OCI-LY7 (cell line): ENCODE measurements at regions of chr1 and their contacts with region 1.

Region 1: DNA sequence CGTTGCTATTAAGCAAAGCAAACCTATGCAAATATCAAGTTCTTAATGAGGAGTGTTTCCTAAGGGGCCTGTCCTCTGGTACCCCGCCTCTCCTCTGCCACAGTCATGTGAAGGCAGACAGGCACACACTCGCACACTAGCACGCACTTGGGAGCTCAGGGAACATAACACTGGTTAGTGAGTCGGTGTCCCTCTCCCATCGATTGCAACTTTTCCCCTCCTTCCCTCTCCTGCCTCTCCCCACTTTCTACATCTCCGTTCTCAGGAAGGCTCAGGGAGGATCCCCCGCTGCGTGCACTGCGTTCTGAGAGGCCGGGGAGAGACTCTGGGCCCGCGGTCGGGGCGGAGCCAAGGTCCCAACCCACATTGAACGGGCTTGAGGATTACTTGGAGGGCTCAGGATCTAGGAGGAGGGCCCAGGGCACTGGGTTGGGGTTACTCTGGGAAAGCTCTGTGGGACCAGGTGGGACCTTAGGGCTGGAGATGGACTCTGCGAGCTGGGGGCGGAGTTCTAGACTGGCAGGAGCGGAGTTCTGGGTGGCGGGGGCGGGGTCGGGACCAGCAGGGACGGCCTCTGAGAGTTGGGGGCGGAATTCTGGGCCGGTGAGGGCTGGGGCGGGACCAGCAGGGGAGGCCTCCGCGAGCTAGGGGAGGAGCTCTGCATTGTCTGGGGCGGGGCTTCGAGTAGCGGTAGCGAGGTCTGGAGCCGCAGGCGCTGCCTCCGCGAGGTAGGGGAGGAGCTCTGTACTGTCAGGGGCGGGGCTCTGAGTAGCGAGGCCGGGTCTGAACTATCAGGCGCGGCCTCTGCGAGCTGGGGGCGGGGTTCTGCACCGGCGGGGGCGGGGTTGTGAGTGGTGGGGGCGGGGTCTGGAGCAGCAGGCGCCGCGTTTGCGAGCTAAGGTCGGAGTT is 533 bp upstream of the LEPR start:
- DNase-seq: peak; percentile 97
- H3K4me3 ChIP-seq: peak overlapping the region; percentile 92
- H3K27ac ChIP-seq: peak overlapping the region; percentile 63
- H3K4me1 ChIP-seq: peaks cover 20% of the 10 kb centered on the region
- CTCF ChIP-seq: no peak

Region 2: DNA sequence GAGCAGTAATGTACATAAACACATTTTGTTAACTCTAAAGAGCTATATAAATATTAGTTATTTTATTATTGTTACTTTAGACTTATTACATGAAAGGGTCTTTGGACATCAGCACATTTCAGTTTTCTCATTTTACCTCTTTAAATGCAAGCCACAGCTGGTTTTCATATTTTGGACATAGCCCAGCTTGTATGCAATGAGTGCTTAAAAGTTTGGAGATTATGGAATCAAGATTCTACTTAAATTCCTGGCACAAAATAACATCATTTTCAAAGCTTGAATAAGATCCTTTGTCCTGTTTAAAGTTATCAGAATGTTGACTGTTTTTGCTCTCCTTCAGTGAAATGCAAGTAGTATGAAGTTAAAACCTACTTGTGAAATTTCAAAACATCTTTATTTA is 15.0 kb before region 1 on chr1:
- CTCF ChIA-PET with region 1: interaction called, 4 read pairs
- POLR2A ChIA-PET with region 1: interaction called, 24 read pairs
- intact Hi-C with region 1: no loop called
- DNase-seq: no peak
- H3K4me3 ChIP-seq: no peak overlapping the region
- H3K27ac ChIP-seq: no peak overlapping the region
- H3K4me1 ChIP-seq: no peaks in the 10 kb centered on the region
- CTCF ChIP-seq: no peak

Region 3: GRCh38 chr1:65431111-65431705 is 11.3 kb after region 1 on chr1:
- CTCF ChIA-PET with region 1: interaction called, 3 read pairs
- POLR2A ChIA-PET with region 1: interaction called, 11 read pairs
- intact Hi-C with region 1: no loop called
- DNase-seq: peak; percentile 46
- H3K4me3 ChIP-seq: no peak overlapping the region
- H3K27ac ChIP-seq: no peak overlapping the region
- H3K4me1 ChIP-seq: no peaks in the 10 kb centered on the region
- CTCF ChIP-seq: peak; percentile 89

Region 4: DNA sequence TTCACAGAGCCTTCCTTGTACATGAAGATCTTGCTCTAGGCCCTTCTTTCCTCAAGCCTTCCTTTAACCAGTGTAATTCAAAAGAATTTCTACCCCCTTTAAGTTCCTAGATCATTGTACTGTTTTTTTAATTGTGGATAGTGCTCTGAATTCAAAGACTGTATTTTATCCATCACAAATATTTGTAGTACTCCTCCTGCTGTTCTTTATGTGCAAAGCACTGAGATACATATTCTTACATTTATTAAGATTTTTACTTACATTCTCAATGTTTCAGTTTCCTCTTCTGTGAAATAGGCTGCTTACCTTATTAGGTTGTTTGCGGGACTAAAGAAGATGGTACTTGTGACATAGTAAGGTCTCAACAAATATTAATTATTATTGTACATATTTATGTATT is 204.0 kb after region 1 on chr1:
- CTCF ChIA-PET with region 1: no interaction called
- POLR2A ChIA-PET with region 1: no interaction called
- intact Hi-C with region 1: no loop called
- DNase-seq: no peak
- H3K4me3 ChIP-seq: no peak overlapping the region
- H3K27ac ChIP-seq: no peak overlapping the region
- H3K4me1 ChIP-seq: no peaks in the 10 kb centered on the region
- CTCF ChIP-seq: no peak